ENCODE measurements at regions of chr21 and their contacts with region 1.

Region 1: DNA sequence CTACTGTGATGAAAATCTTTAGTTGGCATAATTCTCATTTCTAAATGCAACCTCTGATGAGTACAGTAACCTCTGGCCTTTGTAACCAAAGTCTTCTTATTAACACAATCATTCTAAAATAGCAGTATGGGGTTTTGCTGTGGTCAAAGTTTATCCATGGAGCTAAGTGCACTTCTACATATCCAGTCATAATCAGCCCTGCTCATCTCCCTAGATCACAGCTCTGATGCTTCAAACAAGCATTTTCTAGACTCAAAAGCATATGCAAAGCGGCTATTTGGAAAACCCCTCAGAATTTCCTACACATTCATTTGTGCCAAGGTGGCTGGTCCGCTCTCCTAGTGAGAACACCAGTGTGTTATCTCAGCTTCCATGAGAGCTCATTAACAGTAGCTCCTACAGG is 418.6 kb downstream of the MRPL39 start:
- DNase-seq: peak; percentile 53
- ATAC-seq: peak; percentile 44
- H3K4me3 ChIP-seq: no peak overlapping the region
- H3K4me3 Mint-ChIP-seq: peak overlapping the region; percentile 24
- H3K27ac ChIP-seq: no peak overlapping the region
- H3K27ac Mint-ChIP-seq: peak overlapping the region; percentile 33
- H3K4me1 ChIP-seq: peaks cover 39 to 40% of the 10 kb centered on the region in 2 donors
- H3K4me1 Mint-ChIP-seq: peaks cover 54% of the 10 kb centered on the region
- H3K27me3 ChIP-seq: no peaks in the 10 kb centered on the region
- H3K27me3 Mint-ChIP-seq: no peaks in the 10 kb centered on the region
- CTCF ChIP-seq: no peak

Region 2: DNA sequence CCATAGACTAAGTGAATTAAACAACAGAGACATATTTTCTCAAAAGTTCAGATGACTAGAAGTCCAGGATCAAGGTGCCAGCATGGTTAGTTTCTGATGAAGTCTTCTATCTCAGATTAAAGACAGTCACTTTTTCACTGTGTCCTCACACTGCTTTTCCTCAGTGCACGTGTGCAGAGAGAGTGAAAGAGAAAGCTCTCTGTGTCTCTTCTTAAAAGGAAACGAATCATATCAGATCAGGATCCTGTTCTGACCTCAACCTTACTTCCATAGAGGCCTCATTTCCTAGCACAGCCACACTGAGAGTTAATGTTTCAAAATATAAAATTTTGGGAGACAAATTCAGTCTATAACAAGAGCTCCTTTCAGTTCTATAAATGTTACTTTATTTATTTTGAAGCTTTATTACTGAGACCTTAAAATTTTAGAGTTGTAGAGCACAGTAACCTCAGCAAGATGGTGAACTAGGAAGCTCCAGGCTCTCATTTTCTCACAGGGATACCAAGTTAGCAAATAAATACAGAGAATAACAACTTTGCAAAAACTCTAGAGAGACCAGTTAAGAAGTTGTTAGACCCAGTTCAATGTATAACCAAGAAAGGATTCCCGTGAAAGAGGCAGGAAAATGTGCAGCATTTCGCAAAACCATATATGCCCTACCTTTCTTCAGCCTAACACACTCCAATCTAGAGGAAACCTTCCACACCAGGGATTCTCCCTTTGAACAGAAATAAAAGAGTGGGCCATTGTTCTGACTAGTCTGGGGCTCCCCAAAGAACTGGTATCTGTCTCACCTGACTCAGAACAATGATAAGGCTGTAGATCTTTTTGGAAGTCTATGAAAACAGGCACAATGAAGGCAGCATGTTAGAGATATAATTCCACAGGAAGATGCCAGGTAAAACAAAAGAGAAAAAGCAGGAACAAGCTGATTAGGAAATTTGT is 46.5 kb after region 1 on chr21:
- CTCF ChIA-PET with region 1: no interaction called
- POLR2A ChIA-PET with region 1: no interaction called
- intact Hi-C with region 1: loop called (anchors 5 kb)
- DNase-seq: peak; percentile 42
- ATAC-seq: peak; percentile 58
- H3K4me3 ChIP-seq: peak overlapping the region in 1 of 5 experiments; percentile 43
- H3K4me3 Mint-ChIP-seq: peak overlapping the region; percentile 65
- H3K27ac ChIP-seq: peak overlapping the region; percentile 8 to 58
- H3K27ac Mint-ChIP-seq: peak overlapping the region; percentile 75
- H3K4me1 ChIP-seq: peaks cover 9 to 20% of the 10 kb centered on the region in 2 donors
- H3K4me1 Mint-ChIP-seq: peaks cover 31% of the 10 kb centered on the region
- H3K27me3 ChIP-seq: no peaks in the 10 kb centered on the region
- H3K27me3 Mint-ChIP-seq: no peaks in the 10 kb centered on the region
- CTCF ChIP-seq: no peak

Measured in B cell (primary cell).